A549 (cell line): ENCODE measurements at regions of chr19 and their contacts with region 1.

Region 1: GRCh38 chr19:31329819-31330218 is 19.4 kb downstream of the TSHZ3 start:
- DNase-seq: no peak
- ATAC-seq: no peak
- H3K4me3 ChIP-seq: no peak overlapping the region
- H3K27ac ChIP-seq: no peak overlapping the region
- H3K4me1 ChIP-seq: 0 out of 3 replicates have a peak, but pooled peaks cover 6% of the 10 kb centered on the region
- CTCF ChIP-seq: no peak
- EP300 ChIP-seq: no peak
- POLR2A ChIP-seq: no peak
- RAD21 ChIP-seq: no peak

Region 2: DNA sequence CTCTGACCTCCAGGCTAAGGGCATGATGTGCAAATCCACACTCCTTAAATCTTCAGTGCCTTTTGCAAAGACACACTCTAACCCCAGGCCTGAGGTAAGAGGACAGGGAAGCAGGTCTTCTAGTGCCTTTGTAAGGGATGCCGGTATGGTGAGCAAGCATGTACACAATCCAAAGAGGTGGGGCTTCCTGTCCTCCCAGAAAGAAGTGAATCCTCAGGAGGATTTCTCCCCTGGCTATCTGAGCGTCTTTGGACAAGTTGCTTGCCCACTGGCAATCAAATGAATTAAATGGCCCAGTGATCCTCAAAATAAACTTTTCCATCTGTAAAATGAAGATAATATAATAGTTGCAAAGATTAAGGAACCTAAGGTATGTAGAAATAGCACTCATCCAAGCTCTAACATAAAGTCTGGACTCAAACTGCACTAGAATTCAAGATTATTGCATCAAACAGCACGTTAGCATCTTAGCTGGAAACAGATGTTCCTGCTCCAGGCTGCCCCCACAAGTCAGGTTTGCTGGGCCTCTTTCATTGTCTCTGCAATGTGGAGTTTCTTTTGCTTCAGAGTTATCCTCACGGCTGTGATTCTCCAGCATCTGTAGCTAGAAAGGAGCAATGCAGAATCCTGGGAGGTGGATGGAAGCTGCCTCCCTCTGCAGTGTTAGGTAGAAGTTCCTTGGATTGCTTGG is 230.2 kb before region 1 on chr19:
- CTCF ChIA-PET with region 1: no interaction called
- POLR2A ChIA-PET with region 1: no interaction called
- DNase-seq: no peak
- ATAC-seq: no peak
- H3K4me3 ChIP-seq: no peak overlapping the region
- H3K27ac ChIP-seq: no peak overlapping the region
- H3K4me1 ChIP-seq: no peaks in the 10 kb centered on the region
- CTCF ChIP-seq: no peak
- EP300 ChIP-seq: no peak
- POLR2A ChIP-seq: no peak
- RAD21 ChIP-seq: no peak

Region 3: GRCh38 chr19:31347828-31348392 is 18.1 kb after region 1 on chr19:
- CTCF ChIA-PET with region 1: interaction called, 10 read pairs
- POLR2A ChIA-PET with region 1: no interaction called
- DNase-seq: no peak
- ATAC-seq: no peak
- H3K4me3 ChIP-seq: peak overlapping the region; percentile 84
- H3K27ac ChIP-seq: no peak overlapping the region
- H3K4me1 ChIP-seq: peaks cover 4% of the 10 kb centered on the region; the same call in 1 of the 3 replicates
- CTCF ChIP-seq: no peak
- EP300 ChIP-seq: no peak
- POLR2A ChIP-seq: no peak
- RAD21 ChIP-seq: no peak